ENCODE measurements at regions of chr19 and their contacts with region 1.

Region 1: GRCh38 chr19:42596391-42597072 is 1.8 kb upstream of the CEACAM8 start:
- DNase-seq: peak; percentile 56
- ATAC-seq: peak; percentile 61
- H3K4me3 Mint-ChIP-seq: no peak overlapping the region
- H3K27ac Mint-ChIP-seq: no peak overlapping the region
- H3K4me1 Mint-ChIP-seq: no peaks in the 10 kb centered on the region
- H3K27me3 Mint-ChIP-seq: peaks cover 15% of the 10 kb centered on the region
- CTCF ChIP-seq: peak; percentile 49

Region 2: DNA sequence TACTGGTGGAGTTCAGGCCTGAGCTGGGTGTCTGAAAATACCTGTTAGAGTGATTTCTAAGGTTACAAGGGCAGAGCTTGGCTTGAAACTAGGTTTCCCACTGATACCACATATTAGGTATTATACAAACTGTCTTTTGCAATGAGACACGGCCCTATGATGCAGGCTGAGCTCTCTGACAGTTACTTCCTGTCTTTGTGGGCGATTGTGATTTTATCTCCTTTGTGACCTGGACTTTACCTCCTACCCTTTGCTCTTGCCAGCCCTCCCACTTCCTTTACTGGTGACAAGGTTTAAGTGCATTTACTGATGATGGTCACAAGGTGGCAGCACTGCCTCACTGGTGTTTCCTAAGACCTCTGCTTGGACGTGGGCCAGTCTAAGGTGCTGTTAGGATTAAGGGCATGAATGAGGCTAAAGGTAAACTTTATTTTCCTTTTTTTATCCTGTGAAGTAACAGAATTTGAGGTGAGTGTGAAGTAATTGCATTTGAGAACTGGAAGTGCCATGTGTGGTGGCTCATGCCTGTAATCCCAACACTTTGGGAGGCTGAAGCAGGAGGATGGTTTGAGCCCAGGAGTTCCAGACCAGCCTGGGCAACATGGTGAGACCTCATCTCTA is 146.1 kb before region 1 on chr19:
- CTCF ChIA-PET with region 1: interaction called, 10 read pairs
- POLR2A ChIA-PET with region 1: no interaction called
- intact Hi-C with region 1: loop called (anchors 1 kb)
- DNase-seq: peak; percentile 50
- ATAC-seq: peak; percentile 99
- H3K4me3 Mint-ChIP-seq: no peak overlapping the region
- H3K27ac Mint-ChIP-seq: no peak overlapping the region
- H3K4me1 Mint-ChIP-seq: peaks cover 14% of the 10 kb centered on the region
- H3K27me3 Mint-ChIP-seq: peaks cover 2% of the 10 kb centered on the region
- CTCF ChIP-seq: peak; percentile 77

Region 3: GRCh38 chr19:42563352-42564210 is 33.0 kb before region 1 on chr19:
- CTCF ChIA-PET with region 1: interaction called, 67 read pairs
- POLR2A ChIA-PET with region 1: no interaction called
- intact Hi-C with region 1: loop called (anchors 1 kb)
- DNase-seq: no peak
- ATAC-seq: peak; percentile 81
- H3K4me3 Mint-ChIP-seq: no peak overlapping the region
- H3K27ac Mint-ChIP-seq: no peak overlapping the region
- H3K4me1 Mint-ChIP-seq: peaks cover 21% of the 10 kb centered on the region
- H3K27me3 Mint-ChIP-seq: peaks cover 12% of the 10 kb centered on the region
- CTCF ChIP-seq: no peak